ENCODE measurements at regions of chr12 and their contacts with region 1.

Region 1: DNA sequence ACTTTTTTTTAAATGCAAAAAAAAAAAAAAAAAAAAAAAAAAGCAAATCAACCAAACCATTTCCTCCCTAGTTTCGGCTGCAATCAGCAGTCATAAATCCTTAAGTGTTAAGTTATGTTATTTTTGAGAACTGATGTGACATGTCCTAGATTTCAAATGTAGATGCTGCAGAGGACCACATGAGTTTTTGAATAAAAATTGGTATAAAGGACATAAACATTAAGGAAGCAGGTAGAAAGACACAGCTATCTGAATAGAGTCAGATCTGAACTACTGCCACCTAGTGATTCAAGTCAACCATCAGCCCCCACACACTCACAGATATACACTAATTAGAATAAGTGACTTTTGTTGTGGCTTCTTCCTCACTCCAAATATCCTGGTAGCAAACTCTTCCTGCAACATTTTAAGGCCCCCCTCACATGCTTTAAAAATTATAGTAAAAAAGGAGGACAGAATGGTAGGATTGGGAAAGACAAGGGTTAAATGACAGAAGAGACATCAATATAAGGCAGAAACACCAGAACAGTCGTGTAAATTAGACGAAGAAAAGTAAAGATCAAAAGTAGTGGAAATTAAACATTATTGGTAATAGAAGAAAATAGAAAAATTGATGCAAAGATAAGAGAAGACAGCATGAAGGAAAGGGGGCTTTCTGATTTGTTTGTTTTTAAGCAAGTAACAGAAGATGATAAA is 394.5 kb upstream of the ATP2B1 start:
- DNase-seq: peak; percentile 63
- H3K4me3 ChIP-seq: no peak overlapping the region
- H3K27ac ChIP-seq: no peak overlapping the region
- H3K4me1 ChIP-seq: no peaks in the 10 kb centered on the region
- H3K27me3 ChIP-seq: no peaks in the 10 kb centered on the region
- CTCF ChIP-seq: peak; percentile 34 to 54
- POLR2A ChIP-seq: no peak

Region 2: DNA sequence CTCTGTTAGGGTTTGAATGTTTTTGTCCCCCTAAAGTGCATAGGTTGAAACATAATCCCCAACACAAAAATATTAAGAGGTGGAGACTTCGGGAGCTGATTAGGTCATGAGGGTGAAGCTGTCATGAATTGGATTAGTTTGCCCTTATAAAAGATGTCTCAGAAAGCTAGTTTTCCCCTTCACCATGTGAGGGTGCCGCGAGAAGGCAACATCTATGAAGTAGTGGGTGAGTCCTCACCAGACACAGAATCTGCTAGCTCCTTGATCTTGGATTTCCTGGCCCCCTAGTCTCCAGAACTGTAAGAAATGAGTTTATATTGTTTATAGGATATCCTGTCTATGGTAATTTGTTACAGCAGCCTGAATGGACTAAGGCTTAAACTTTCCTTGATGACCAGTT is 93.0 kb before region 1 on chr12:
- CTCF ChIA-PET with region 1: interaction called, 11 read pairs
- POLR2A ChIA-PET with region 1: no interaction called
- dilution Hi-C with region 1: no loop called
- intact Hi-C with region 1: no loop called
- DNase-seq: peak; percentile 37
- H3K4me3 ChIP-seq: no peak overlapping the region
- H3K27ac ChIP-seq: no peak overlapping the region
- H3K4me1 ChIP-seq: no peaks in the 10 kb centered on the region
- H3K27me3 ChIP-seq: no peaks in the 10 kb centered on the region
- CTCF ChIP-seq: peak in 1 of 2 donors; percentile 14
- POLR2A ChIP-seq: no peak

Region 3: GRCh38 chr12:90064852-90065801 is 38.0 kb before region 1 on chr12:
- CTCF ChIA-PET with region 1: interaction called, 8 read pairs
- POLR2A ChIA-PET with region 1: no interaction called
- dilution Hi-C with region 1: no loop called
- intact Hi-C with region 1: loop called (anchors 2 kb)
- DNase-seq: peak; percentile 83
- H3K4me3 ChIP-seq: no peak overlapping the region
- H3K27ac ChIP-seq: no peak overlapping the region
- H3K4me1 ChIP-seq: peaks cover 10% of the 10 kb centered on the region
- H3K27me3 ChIP-seq: no peaks in the 10 kb centered on the region
- CTCF ChIP-seq: no peak
- POLR2A ChIP-seq: no peak

Region 4: DNA sequence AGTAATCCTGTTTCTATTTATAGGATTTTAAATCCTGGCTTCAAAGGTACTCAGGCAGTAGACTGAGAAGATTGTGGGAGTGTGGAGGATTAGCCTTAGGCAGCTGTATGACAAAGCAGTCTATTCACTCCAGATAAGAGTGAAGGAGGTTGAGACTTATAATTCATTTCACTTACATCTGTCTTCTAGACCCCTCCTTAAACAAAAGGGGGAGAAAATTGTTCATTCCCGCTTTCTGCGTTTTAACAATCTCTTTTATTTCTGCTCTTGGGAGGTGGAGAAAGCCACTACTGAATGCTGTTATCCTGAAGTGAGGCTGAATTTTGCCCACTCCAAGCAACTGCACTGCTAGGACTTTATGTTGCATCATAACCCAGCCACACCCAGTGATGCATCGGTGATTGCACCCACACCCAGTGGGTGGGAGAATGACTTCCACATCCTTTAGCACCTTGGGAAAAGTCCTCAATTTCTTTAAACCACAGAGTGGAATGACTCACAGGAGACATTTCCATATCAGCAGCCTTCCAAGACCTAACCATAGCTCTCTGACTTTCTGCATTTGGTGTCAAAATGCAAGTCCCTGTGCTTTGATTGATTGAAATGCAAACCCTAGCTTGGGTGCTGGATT is 12.0 kb before region 1 on chr12:
- CTCF ChIA-PET with region 1: interaction called, 18 read pairs
- POLR2A ChIA-PET with region 1: interaction called, 4 read pairs
- dilution Hi-C with region 1: no loop called
- intact Hi-C with region 1: no loop called
- DNase-seq: peak; percentile 12
- H3K4me3 ChIP-seq: no peak overlapping the region
- H3K27ac ChIP-seq: no peak overlapping the region
- H3K4me1 ChIP-seq: no peaks in the 10 kb centered on the region
- H3K27me3 ChIP-seq: no peaks in the 10 kb centered on the region
- CTCF ChIP-seq: no peak
- POLR2A ChIP-seq: no peak

Region 5: DNA sequence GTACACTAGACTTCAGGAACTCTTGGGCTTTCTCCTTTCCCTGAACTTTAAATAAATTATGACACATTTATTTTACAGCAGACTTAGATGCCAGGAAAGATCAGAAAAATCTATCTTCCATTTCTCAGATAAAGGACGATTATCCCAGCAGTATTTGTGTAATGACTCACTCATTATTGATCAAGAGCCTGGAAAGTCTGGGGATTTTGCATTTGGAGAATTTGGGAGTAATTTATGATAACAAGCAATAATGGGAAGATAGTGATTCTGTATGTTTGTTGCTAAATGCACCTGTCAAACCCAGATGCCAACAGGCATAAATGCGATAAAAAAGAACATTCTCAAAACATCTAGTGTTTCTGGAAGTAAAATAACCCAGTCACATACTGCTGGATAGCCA is 85.8 kb after region 1 on chr12:
- CTCF ChIA-PET with region 1: no interaction called
- POLR2A ChIA-PET with region 1: no interaction called
- dilution Hi-C with region 1: no loop called
- intact Hi-C with region 1: no loop called
- DNase-seq: no peak
- H3K4me3 ChIP-seq: no peak overlapping the region
- H3K27ac ChIP-seq: no peak overlapping the region
- H3K4me1 ChIP-seq: no peaks in the 10 kb centered on the region
- H3K27me3 ChIP-seq: no peaks in the 10 kb centered on the region
- CTCF ChIP-seq: no peak
- POLR2A ChIP-seq: no peak

Region 6: DNA sequence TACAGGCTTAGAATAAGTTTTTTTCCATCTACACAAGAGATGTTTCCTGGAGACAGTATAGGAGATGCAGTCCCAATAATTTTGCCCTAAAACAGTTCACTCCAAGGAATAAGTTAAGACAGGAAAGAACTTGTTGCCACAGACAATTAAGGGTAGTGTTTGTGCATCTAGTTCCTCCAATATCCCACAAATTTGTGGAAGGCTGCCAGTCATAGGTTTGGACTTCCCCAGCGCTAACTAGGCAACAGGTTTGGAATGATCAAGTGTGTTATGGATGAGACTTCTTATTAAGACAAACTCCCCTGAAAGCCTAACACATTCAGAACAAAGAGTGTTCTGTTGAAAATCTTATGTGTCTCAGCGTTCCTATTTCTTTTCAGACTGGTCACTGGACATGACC is 240.9 kb after region 1 on chr12:
- CTCF ChIA-PET with region 1: no interaction called
- POLR2A ChIA-PET with region 1: no interaction called
- dilution Hi-C with region 1: no loop called
- intact Hi-C with region 1: no loop called
- DNase-seq: no peak
- H3K4me3 ChIP-seq: no peak overlapping the region
- H3K27ac ChIP-seq: no peak overlapping the region
- H3K4me1 ChIP-seq: no peaks in the 10 kb centered on the region
- H3K27me3 ChIP-seq: no peaks in the 10 kb centered on the region
- CTCF ChIP-seq: no peak
- POLR2A ChIP-seq: no peak